PC-9 (cell line): ENCODE measurements at regions of chr4 and their contacts with region 1.

Region 1: DNA sequence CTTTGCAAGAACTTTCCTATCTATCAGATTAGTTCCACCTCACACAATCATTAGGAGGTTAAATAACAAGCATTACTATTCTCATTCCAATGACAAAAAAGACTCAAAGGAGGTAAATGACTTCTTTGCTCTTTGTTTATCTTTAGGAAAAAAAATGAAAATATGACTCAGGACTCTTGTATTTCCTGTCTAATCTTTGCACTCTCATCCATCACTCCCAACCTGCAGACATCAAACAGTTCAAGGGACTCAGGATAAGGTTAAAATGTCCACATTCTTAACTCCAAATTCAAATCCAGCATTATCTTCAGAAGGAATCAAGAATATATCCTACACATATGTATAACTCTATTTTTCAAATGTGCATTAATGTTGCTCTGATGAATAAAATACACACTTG is 139.6 kb downstream of the UNC5C start:
- DNase-seq: no peak
- H3K4me3 ChIP-seq: no peak overlapping the region
- H3K27ac ChIP-seq: no peak overlapping the region
- H3K4me1 ChIP-seq: peaks cover 9% of the 10 kb centered on the region; the same call in 1 of the 2 replicates
- H3K27me3 ChIP-seq: no peaks in the 10 kb centered on the region
- CTCF ChIP-seq: no peak

Region 2: GRCh38 chr4:95255396-95256107 is 153.6 kb before region 1 on chr4:
- CTCF ChIA-PET with region 1: no interaction called
- POLR2A ChIA-PET with region 1: no interaction called
- intact Hi-C with region 1: loop called (anchors 10 kb)
- DNase-seq: no peak
- H3K4me3 ChIP-seq: no peak overlapping the region
- H3K27ac ChIP-seq: no peak overlapping the region
- H3K4me1 ChIP-seq: peaks cover 9% of the 10 kb centered on the region; the same call in 1 of the 2 replicates
- H3K27me3 ChIP-seq: no peaks in the 10 kb centered on the region
- CTCF ChIP-seq: no peak